Right ventricle myocardium inferior (tissue), 1 donor: ENCODE measurements at regions of chr19 and their contacts with region 1.

Region 1: GRCh38 chr19:36528194-36528920 is at the start of gene ZNF260:
- DNase-seq: peak; percentile 97
- ATAC-seq: peak; percentile 98
- total RNA-seq, gene ZNF260: 9.1 TPM

Region 2: GRCh38 chr19:36573020-36573885 is 44.9 kb after region 1 on chr19 and contains the start of gene ZNF529:
- intact Hi-C with region 1: loop called (anchors 10 kb)
- DNase-seq: peak; percentile 93
- ATAC-seq: peak; percentile 98
- total RNA-seq, gene ZNF529: 15.3 TPM

Region 3: GRCh38 chr19:36672368-36672767 is 144.0 kb after region 1 on chr19:
- intact Hi-C with region 1: no loop called
- DNase-seq: no peak
- ATAC-seq: peak; percentile 51

Region 4: GRCh38 chr19:37172368-37173366 is 644.3 kb after region 1 on chr19 and contains the start of gene ZNF585A:
- intact Hi-C with region 1: loop called (anchors 5 kb)
- DNase-seq: peak; percentile 97
- ATAC-seq: peak; percentile 100
- total RNA-seq, gene ZNF585A: 10.3 TPM